ENCODE measurements at regions of chr15 and their contacts with region 1.

Region 1: DNA sequence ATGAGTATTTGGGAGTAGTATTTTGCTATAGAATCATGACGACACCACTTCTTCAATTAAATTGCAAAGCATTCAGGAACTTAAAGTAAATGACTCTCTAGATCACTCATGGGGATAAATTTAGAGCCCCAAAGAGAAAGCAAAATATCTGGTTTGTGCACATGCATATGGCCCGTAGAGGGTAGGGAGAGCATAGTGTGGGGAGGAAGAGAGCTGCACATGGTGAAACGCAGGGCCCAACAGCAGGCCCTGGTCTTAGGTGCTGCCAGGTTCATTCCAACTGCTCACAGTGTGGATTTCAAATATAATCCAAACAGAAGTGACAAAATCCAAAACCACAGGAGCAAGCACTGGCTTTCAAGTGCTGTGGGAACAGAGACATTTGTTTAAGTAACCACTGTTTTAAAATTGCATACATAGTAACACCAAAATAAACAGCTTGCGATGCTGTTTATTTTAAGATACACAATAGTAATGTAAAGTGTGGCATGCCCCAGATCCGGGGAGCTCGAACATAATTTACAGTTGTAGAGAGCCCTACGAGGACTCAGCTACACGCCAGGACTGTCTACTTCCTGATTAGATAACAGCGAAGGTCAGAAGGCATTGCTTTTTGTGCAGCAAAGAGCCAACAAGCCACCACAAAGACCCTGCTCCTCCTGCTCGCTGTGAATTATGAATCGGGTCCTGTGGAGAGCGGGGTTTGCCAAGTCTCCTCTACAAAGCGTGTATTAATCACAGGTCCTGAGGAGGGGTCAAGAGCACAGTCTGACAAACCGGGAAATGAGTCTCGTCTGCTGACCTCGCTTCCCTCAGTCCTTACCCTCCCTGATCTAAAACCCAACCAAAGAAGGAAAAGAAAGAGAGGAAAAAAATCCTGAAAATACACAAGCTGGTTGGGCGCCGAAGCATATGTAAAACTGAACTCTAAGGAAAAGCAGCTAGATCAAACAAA is 80.6 kb downstream of the MEIS2 start:
- DNase-seq: peak; percentile 0
- H3K4me3 Mint-ChIP-seq: peak overlapping the region; percentile 61
- H3K27ac Mint-ChIP-seq: peak overlapping the region; percentile 85
- H3K4me1 Mint-ChIP-seq: peaks cover 26% of the 10 kb centered on the region
- H3K27me3 Mint-ChIP-seq: no peaks in the 10 kb centered on the region
- CTCF ChIP-seq: no peak

Region 2: DNA sequence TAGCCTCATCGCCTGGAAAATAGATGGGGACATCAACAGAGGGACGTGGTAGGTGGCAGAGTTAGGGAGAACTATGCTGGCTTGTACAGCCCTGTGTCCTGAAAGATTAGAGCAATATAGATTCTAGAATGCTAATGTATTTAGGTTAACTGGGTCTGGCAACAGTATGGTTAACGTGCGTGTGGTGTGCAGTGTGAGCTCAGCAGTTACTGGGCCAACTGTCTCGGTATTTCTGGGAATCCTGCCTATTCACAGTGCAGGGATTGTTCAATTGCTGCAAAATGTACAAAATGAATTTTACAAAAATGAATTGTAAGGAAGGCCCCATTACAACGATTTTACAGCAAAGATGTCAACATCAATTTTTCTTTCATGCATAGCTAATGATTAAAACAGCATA is 60.0 kb after region 1 on chr15:
- CTCF ChIA-PET with region 1: no interaction called
- intact Hi-C with region 1: loop called (anchors 10 kb)
- DNase-seq: no peak
- H3K4me3 Mint-ChIP-seq: no peak overlapping the region
- H3K27ac Mint-ChIP-seq: no peak overlapping the region
- H3K4me1 Mint-ChIP-seq: no peaks in the 10 kb centered on the region
- H3K27me3 Mint-ChIP-seq: no peaks in the 10 kb centered on the region
- CTCF ChIP-seq: no peak